CD4-positive, alpha-beta memory T cell (primary cell): ENCODE measurements at regions of chr10 and their contacts with region 1.

Region 1: GRCh38 chr10:110304780-110305421 is at the start of gene SMNDC1:
- DNase-seq: peak; percentile 96 to 97 (median 96)
- H3K4me3 ChIP-seq: peak within 1 kb of the TSS; percentile 62 to 70
- H3K4me3 Mint-ChIP-seq: peak within 1 kb of the TSS; percentile 96 to 98 (median 98)
- H3K27ac ChIP-seq: peak within 1 kb of the TSS; percentile 81
- H3K27ac Mint-ChIP-seq: peak within 1 kb of the TSS; percentile 95 to 100 (median 99)
- H3K4me1 ChIP-seq: peaks cover 52% of the 10 kb centered on the region
- H3K4me1 Mint-ChIP-seq: peaks cover 27 to 58% (median 45%) of the 10 kb centered on the region in 4 donors
- H3K27me3 ChIP-seq: no peaks in the 10 kb centered on the region
- H3K27me3 Mint-ChIP-seq: no peaks in the 10 kb centered on the region
- total RNA-seq, gene SMNDC1: 39.0 to 39.3 TPM

Region 2: DNA sequence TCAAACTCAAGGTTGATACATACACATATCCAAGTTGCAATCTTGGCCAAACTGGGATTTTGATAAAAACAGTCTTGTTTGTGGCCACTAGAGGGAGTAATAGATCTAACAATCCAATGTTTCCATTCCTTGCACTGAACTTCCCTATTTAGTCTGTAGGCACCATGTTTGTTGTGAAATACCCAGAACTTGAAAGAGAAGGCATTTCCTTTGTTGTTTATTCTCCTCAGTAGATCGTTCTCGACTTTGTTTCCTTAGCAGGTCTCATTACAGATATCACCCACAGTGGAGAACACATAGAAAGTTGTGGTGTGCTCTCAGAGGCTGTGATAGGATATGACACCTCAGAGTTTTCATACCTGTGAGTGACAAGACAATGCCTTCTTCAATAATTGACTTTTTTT is 167.8 kb before region 1 on chr10:
- CTCF ChIA-PET with region 1: interaction called, 6 read pairs
- POLR2A ChIA-PET with region 1: interaction called, 8 read pairs
- intact Hi-C with region 1: loop called (anchors 1 kb)
- DNase-seq: peak; percentile 46 to 70 (median 66)
- H3K4me3 ChIP-seq: no peak overlapping the region
- H3K4me3 Mint-ChIP-seq: peak overlapping the region in 1 of 8 donors; percentile 0
- H3K27ac ChIP-seq: peak overlapping the region; percentile 7
- H3K27ac Mint-ChIP-seq: peak overlapping the region; percentile 7 to 83 (median 18)
- H3K4me1 ChIP-seq: peaks cover 24% of the 10 kb centered on the region
- H3K4me1 Mint-ChIP-seq: peaks cover 17 to 30% (median 26%) of the 10 kb centered on the region in 4 donors
- H3K27me3 ChIP-seq: no peaks in the 10 kb centered on the region
- H3K27me3 Mint-ChIP-seq: no peaks in the 10 kb centered on the region

Region 3: GRCh38 chr10:110354322-110354766 is 49.4 kb after region 1 on chr10:
- CTCF ChIA-PET with region 1: interaction called, 13 read pairs
- POLR2A ChIA-PET with region 1: interaction called, 34 read pairs
- intact Hi-C with region 1: loop called (anchors 1 kb)
- DNase-seq: peak; percentile 70 to 78 (median 77)
- H3K4me3 ChIP-seq: no peak overlapping the region
- H3K4me3 Mint-ChIP-seq: peak overlapping the region in 7 of 8 donors; percentile 44 to 75 (median 53)
- H3K27ac ChIP-seq: peak overlapping the region; percentile 81
- H3K27ac Mint-ChIP-seq: peak overlapping the region; percentile 93 to 100 (median 100)
- H3K4me1 ChIP-seq: peaks cover 53% of the 10 kb centered on the region
- H3K4me1 Mint-ChIP-seq: peaks cover 43 to 57% (median 52%) of the 10 kb centered on the region in 4 donors
- H3K27me3 ChIP-seq: no peaks in the 10 kb centered on the region
- H3K27me3 Mint-ChIP-seq: no peaks in the 10 kb centered on the region

Region 4: DNA sequence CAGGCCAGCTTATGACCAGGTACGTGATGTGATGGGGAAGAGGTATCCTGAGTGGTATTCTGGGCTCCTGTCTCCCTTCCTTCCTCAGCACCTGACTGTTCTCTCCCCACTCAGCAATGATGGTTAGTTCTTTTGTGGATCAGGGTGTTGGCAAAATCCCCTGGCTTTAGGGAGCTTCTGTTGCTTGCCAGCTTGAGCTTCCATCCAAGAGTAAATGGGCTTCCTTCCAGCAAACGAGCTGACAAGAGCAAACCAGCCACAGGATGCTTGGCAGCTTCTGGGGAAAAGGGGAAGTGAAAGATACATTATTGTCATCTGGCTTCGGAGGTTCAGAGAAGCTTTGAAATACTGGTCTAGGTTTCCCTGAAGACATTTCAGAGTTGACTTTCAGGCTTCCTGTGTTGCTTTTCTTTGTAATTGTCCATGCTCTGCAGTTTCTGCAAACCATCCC is 198.0 kb after region 1 on chr10:
- CTCF ChIA-PET with region 1: interaction called, 40 read pairs
- POLR2A ChIA-PET with region 1: interaction called, 49 read pairs
- intact Hi-C with region 1: no loop called
- DNase-seq: peak in 1 of 5 donors; percentile 14
- H3K4me3 ChIP-seq: peak overlapping the region in 1 of 2 donors; percentile 28
- H3K4me3 Mint-ChIP-seq: peak overlapping the region; percentile 61 to 98 (median 94)
- H3K27ac ChIP-seq: peak overlapping the region; percentile 79
- H3K27ac Mint-ChIP-seq: peak overlapping the region; percentile 90 to 97 (median 95)
- H3K4me1 ChIP-seq: peaks cover 80% of the 10 kb centered on the region
- H3K4me1 Mint-ChIP-seq: peaks cover 64 to 90% (median 81%) of the 10 kb centered on the region in 4 donors
- H3K27me3 ChIP-seq: no peaks in the 10 kb centered on the region
- H3K27me3 Mint-ChIP-seq: no peaks in the 10 kb centered on the region

Region 5: GRCh38 chr10:110600487-110601101 is 295.7 kb after region 1 on chr10:
- CTCF ChIA-PET with region 1: interaction called, 26 read pairs
- POLR2A ChIA-PET with region 1: interaction called, 4 read pairs
- intact Hi-C with region 1: loop called (anchors 1 kb)
- DNase-seq: peak in 4 of 5 donors; percentile 40 to 49 (median 44)
- H3K4me3 ChIP-seq: no peak overlapping the region
- H3K4me3 Mint-ChIP-seq: no peak overlapping the region
- H3K27ac ChIP-seq: no peak overlapping the region
- H3K27ac Mint-ChIP-seq: peak overlapping the region in 3 of 7 donors; percentile 36 to 50 (median 41)
- H3K4me1 ChIP-seq: no peaks in the 10 kb centered on the region
- H3K4me1 Mint-ChIP-seq: peaks cover 0 to 2% (median 0%) of the 10 kb centered on the region in 4 donors
- H3K27me3 ChIP-seq: no peaks in the 10 kb centered on the region
- H3K27me3 Mint-ChIP-seq: no peaks in the 10 kb centered on the region

Region 6: GRCh38 chr10:110615057-110615747 is 310.3 kb after region 1 on chr10:
- CTCF ChIA-PET with region 1: no interaction called
- POLR2A ChIA-PET with region 1: no interaction called
- intact Hi-C with region 1: no loop called
- DNase-seq: no peak
- H3K4me3 ChIP-seq: no peak overlapping the region
- H3K4me3 Mint-ChIP-seq: no peak overlapping the region
- H3K27ac ChIP-seq: no peak overlapping the region
- H3K27ac Mint-ChIP-seq: peak overlapping the region in 1 of 7 donors; percentile 51
- H3K4me1 ChIP-seq: peaks cover 13% of the 10 kb centered on the region
- H3K4me1 Mint-ChIP-seq: peaks cover 6 to 24% (median 12%) of the 10 kb centered on the region in 4 donors
- H3K27me3 ChIP-seq: no peaks in the 10 kb centered on the region
- H3K27me3 Mint-ChIP-seq: no peaks in the 10 kb centered on the region

Region 7: GRCh38 chr10:112140110-112140970 is 1835.4 kb after region 1 on chr10:
- CTCF ChIA-PET with region 1: interaction called, 5 read pairs
- POLR2A ChIA-PET with region 1: no interaction called
- intact Hi-C with region 1: loop called (anchors 5 kb)
- DNase-seq: peak; percentile 47 to 76 (median 51)
- H3K4me3 ChIP-seq: no peak overlapping the region
- H3K4me3 Mint-ChIP-seq: no peak overlapping the region
- H3K27ac ChIP-seq: no peak overlapping the region
- H3K27ac Mint-ChIP-seq: no peak overlapping the region
- H3K4me1 ChIP-seq: no peaks in the 10 kb centered on the region
- H3K4me1 Mint-ChIP-seq: no peaks in the 10 kb centered on the region
- H3K27me3 ChIP-seq: no peaks in the 10 kb centered on the region
- H3K27me3 Mint-ChIP-seq: peaks cover 0 to 5% of the 10 kb centered on the region in 2 donors